ENCODE measurements at regions of chr7 and their contacts with region 1.

Region 1: GRCh38 chr7:143008007-143008901 is 18.7 kb downstream of the OR9A2 start:
- DNase-seq: peak; percentile 73 to 84
- H3K4me3 ChIP-seq: no peak overlapping the region
- H3K27ac ChIP-seq: no peak overlapping the region
- H3K4me1 ChIP-seq: peaks cover 0 to 2% (median under 1%) of the 10 kb centered on the region in 4 donors
- H3K27me3 ChIP-seq: peaks cover 0 to 4% of the 10 kb centered on the region in 2 donors
- CTCF ChIP-seq: peak; percentile 91 to 94

Region 2: DNA sequence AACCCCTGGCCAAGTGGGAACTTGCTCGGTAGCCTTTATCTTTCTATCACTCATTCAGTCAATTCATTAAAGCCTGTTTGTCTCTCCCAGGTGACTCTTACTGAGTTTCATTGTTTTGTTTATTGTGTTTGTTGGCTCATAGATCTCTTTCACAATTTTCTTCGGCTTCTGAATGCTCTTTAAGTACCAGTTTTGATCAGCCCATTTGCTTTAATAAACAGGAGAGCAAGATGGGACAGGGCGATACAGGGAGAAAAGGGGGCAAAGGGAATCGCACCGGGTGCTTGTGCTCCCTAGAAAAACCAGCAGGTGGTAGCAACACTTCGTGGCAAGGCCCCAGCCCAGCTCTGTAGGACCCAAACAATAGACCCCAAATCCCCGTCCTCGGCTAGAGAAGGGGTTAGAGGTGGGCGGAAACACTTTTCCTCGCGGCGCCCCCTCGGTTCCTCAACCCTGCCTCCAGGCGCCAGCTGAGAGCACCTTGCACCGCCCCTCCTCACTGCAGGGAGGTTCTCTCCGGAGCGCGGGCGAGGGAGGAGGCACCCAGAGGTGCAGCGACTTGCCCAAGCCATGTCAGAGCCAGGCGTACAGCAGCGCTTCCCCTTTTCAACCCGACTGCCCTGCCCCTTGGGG is 154.4 kb before region 1 on chr7:
- intact Hi-C with region 1: loop called (anchors 2 kb)
- DNase-seq: peak; percentile 66 to 82
- H3K4me3 ChIP-seq: peak overlapping the region; percentile 77 to 84
- H3K27ac ChIP-seq: peak overlapping the region; percentile 62 to 71
- H3K4me1 ChIP-seq: peaks cover 0 to 29% (median 17%) of the 10 kb centered on the region in 4 donors
- H3K27me3 ChIP-seq: peaks cover 0 to 10% of the 10 kb centered on the region in 2 donors
- CTCF ChIP-seq: peak; percentile 82 to 86

Region 3: GRCh38 chr7:143214789-143215679 is 206.8 kb after region 1 on chr7:
- intact Hi-C with region 1: loop called (anchors 5 kb)
- DNase-seq: peak in 1 of 2 donors; percentile 61
- H3K4me3 ChIP-seq: no peak overlapping the region
- H3K27ac ChIP-seq: no peak overlapping the region
- H3K4me1 ChIP-seq: no peaks in the 10 kb centered on the region
- H3K27me3 ChIP-seq: peaks cover 0 to under 1% of the 10 kb centered on the region in 2 donors
- CTCF ChIP-seq: peak; percentile 99